Uterus (tissue), 4 donors: ENCODE measurements at regions of chr22 and their contacts with region 1.

Region 1: GRCh38 chr22:40950962-40951794 is at the start of gene RBX1:
- DNase-seq: peak; percentile 98 to 99
- H3K4me3 ChIP-seq: peak within 1 kb of the TSS; percentile 74 to 94
- H3K27ac ChIP-seq: peak within 1 kb of the TSS; percentile 96 to 97
- H3K4me1 ChIP-seq: peaks cover 0 to 7% of the 10 kb centered on the region in 2 donors
- H3K27me3 ChIP-seq: no peaks in the 10 kb centered on the region
- CTCF ChIP-seq: no peak
- POLR2A ChIP-seq: peak; percentile 70 to 71
- total RNA-seq, gene RBX1: 33.8 to 75.9 (median 57.6) TPM

Region 2: DNA sequence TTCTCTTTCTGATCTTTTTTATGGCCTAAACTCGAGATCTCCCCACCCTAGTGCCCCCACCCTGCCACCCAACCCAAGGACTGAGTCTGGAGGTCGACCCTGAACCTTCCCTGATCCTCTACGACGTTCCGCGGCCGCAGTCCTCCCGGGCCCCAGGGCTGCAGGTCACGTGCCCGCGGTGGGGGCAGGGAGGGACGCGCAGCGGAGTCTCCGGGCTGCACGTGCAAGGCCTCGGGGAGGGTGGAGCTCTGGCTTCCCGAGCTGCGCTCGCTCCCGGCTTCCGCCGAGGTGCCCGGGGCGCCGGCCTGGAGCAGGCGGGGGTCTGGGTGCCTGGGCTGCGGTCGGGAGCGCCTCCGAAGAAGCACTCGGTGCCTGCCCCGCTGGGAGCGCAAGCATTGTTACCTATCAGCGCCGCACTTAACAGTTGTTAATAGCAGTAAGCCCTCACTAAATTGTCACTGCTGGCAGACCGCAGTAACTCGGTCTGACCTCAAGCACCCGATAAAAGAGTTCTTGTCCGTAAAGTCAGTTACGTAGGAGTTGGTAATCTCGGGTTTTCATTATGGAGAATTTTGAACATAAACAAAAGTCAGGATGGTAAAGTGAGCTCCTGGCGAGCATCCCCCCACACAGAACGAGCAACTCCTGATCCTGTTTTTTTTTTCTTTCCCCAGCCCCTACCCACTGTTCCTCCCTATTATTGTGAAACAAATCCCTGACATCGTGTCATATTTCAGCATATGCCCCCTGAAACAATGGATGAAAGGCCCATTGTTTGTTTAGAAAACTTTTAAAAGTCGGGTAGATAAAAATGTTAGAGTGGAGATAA is 71.5 kb after region 1 on chr22:
- intact Hi-C with region 1: loop called (anchors 10 kb)
- DNase-seq: peak; percentile 93 to 94
- H3K4me3 ChIP-seq: peak overlapping the region; percentile 66 to 75
- H3K27ac ChIP-seq: peak overlapping the region; percentile 97 to 99
- H3K4me1 ChIP-seq: no peaks in the 10 kb centered on the region
- H3K27me3 ChIP-seq: no peaks in the 10 kb centered on the region
- CTCF ChIP-seq: no peak
- POLR2A ChIP-seq: peak; percentile 69 to 71

Region 3: GRCh38 chr22:41091132-41092022 is 140.2 kb after region 1 on chr22:
- intact Hi-C with region 1: loop called (anchors 1 kb)
- DNase-seq: peak; percentile 99
- H3K4me3 ChIP-seq: peak overlapping the region; percentile 80 to 91
- H3K27ac ChIP-seq: peak overlapping the region; percentile 100
- H3K4me1 ChIP-seq: no peaks in the 10 kb centered on the region
- H3K27me3 ChIP-seq: no peaks in the 10 kb centered on the region
- CTCF ChIP-seq: peak in 2 of 4 experiments; percentile 7 to 22
- POLR2A ChIP-seq: peak; percentile 93 to 95